ENCODE measurements at regions of chr5 and their contacts with region 1.

Region 1: DNA sequence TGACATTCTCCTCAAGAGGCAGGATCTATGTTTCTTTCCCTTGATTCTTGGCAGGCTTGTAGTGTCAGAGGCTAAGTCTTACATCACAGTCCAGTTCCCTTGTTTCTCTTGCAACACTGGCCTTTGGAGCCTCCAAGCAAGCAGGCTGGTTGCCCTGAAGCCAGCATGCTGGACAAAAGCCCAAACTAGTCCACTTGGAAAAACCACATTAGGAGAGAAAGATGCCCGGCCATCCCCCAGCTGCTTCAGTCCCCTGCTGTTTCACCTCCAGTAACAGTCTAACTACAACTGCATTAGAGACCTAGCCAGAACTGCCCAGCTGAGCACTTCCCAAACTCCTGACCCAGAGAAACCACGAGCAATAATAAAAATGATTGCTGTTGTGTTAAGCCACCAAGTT is 87.6 kb downstream of the ADAMTS6 start:
- DNase-seq: peak; percentile 84

Region 2: GRCh38 chr5:65332591-65332990 is 61.5 kb before region 1 on chr5:
- intact Hi-C with region 1: loop called in 1 of 2 experiments (anchors 2 kb)
- DNase-seq: no peak

Region 3: GRCh38 chr5:65434122-65434521 is 40.0 kb after region 1 on chr5:
- intact Hi-C with region 1: no loop called
- DNase-seq: no peak